ENCODE measurements at regions of chr1 and their contacts with region 1.

Region 1: DNA sequence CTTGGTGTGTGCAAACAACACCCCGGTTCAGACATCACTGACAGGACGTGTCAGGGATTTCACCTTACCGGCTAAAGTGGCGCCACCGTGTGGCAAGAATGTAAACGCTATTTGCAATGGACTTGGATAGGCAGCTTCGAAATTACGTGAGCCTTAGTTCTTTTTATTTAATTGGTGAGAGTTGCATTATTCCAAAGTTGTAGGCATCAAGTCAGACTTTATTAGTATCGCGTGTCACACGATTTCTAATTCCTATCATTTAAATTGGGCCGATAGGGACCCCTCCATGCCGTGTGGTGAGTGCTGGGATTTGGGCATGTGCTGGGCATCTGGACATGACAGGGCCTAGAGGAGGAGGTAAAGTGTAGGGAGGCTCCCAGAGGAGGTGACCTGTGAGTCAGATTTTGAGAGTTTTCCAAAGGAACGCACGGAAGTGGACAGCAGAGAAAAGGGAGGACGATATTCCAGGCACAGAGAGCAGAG is 14.5 kb upstream of the CPT2 start:
- DNase-seq: peak; percentile 84 to 93 (median 84)
- ATAC-seq: peak; percentile 81
- H3K4me3 ChIP-seq: no peak overlapping the region
- H3K27ac ChIP-seq: no peak overlapping the region
- H3K4me1 ChIP-seq: peaks cover 16 to 34% of the 10 kb centered on the region in 2 experiments
- H3K27me3 ChIP-seq: peaks cover 20 to 37% of the 10 kb centered on the region in 2 experiments; a peak in 4 of 5 replicates
- CTCF ChIP-seq: peak; percentile 85 to 95 (median 90)
- EP300 ChIP-seq: no peak
- POLR2A ChIP-seq: no peak
- RAD21 ChIP-seq: peak; percentile 47 to 78

Region 2: GRCh38 chr1:52702886-52703787 is 479.0 kb before region 1 on chr1:
- CTCF ChIA-PET with region 1: no interaction called
- POLR2A ChIA-PET with region 1: no interaction called
- in situ Hi-C with region 1: loop called (anchors 10 kb)
- intact Hi-C with region 1: loop called (anchors 2 kb)
- DNase-seq: peak; percentile 94 to 97 (median 95)
- ATAC-seq: peak; percentile 94
- H3K4me3 ChIP-seq: peak overlapping the region; percentile 26
- H3K27ac ChIP-seq: peak overlapping the region; percentile 61; the same call in 2 of the 3 replicates
- H3K4me1 ChIP-seq: peaks cover 9 to 13% of the 10 kb centered on the region in 2 experiments; a peak in 4 of 5 replicates
- H3K27me3 ChIP-seq: no peaks in the 10 kb centered on the region
- CTCF ChIP-seq: no peak
- EP300 ChIP-seq: peak; percentile 42; the same call in 1 of the 2 replicates
- POLR2A ChIP-seq: peak; percentile 71
- RAD21 ChIP-seq: no peak

Region 3: GRCh38 chr1:52913537-52913936 is 268.6 kb before region 1 on chr1:
- CTCF ChIA-PET with region 1: no interaction called
- POLR2A ChIA-PET with region 1: no interaction called
- in situ Hi-C with region 1: loop called (anchors 25 kb)
- intact Hi-C with region 1: loop called (anchors 2 kb)
- DNase-seq: peak; percentile 81 to 87 (median 84)
- ATAC-seq: peak; percentile 91
- H3K4me3 ChIP-seq: no peak overlapping the region
- H3K27ac ChIP-seq: peak overlapping the region; percentile 43; the same call in 1 of the 3 replicates
- H3K4me1 ChIP-seq: peaks cover 31 to 39% of the 10 kb centered on the region in 2 experiments
- H3K27me3 ChIP-seq: no peaks in the 10 kb centered on the region
- CTCF ChIP-seq: peak; percentile 75 to 82 (median 80)
- EP300 ChIP-seq: peak; percentile 71
- POLR2A ChIP-seq: no peak
- RAD21 ChIP-seq: peak; percentile 30 to 72; a peak in 3 of 4 replicates

Region 4: GRCh38 chr1:53127306-53127945 is 54.7 kb before region 1 on chr1:
- CTCF ChIA-PET with region 1: no interaction called
- POLR2A ChIA-PET with region 1: no interaction called
- in situ Hi-C with region 1: no loop called
- intact Hi-C with region 1: loop called (anchors 2 kb)
- DNase-seq: no peak
- ATAC-seq: peak; percentile 25; the same call in 1 of the 3 replicates
- H3K4me3 ChIP-seq: no peak overlapping the region
- H3K27ac ChIP-seq: no peak overlapping the region
- H3K4me1 ChIP-seq: peaks cover 0 to 8% of the 10 kb centered on the region in 2 experiments; a peak in 3 of 5 replicates
- H3K27me3 ChIP-seq: peaks cover 37 to 60% of the 10 kb centered on the region in 2 experiments
- CTCF ChIP-seq: no peak
- EP300 ChIP-seq: no peak
- POLR2A ChIP-seq: no peak
- RAD21 ChIP-seq: no peak

Region 5: GRCh38 chr1:53165408-53165961 is 16.7 kb before region 1 on chr1:
- CTCF ChIA-PET with region 1: no interaction called
- POLR2A ChIA-PET with region 1: interaction called, 19 read pairs
- in situ Hi-C with region 1: no loop called
- intact Hi-C with region 1: no loop called
- DNase-seq: no peak
- ATAC-seq: no peak
- H3K4me3 ChIP-seq: no peak overlapping the region
- H3K27ac ChIP-seq: no peak overlapping the region
- H3K4me1 ChIP-seq: peaks cover 6 to 9% of the 10 kb centered on the region in 2 experiments; a peak in 4 of 5 replicates
- H3K27me3 ChIP-seq: peaks cover 14 to 18% of the 10 kb centered on the region in 2 experiments; a peak in 4 of 5 replicates
- CTCF ChIP-seq: no peak
- EP300 ChIP-seq: no peak
- POLR2A ChIP-seq: no peak
- RAD21 ChIP-seq: no peak

Region 6: GRCh38 chr1:53196485-53197270 is 14.5 kb after region 1 on chr1 and contains the start of gene CPT2:
- CTCF ChIA-PET with region 1: no interaction called
- POLR2A ChIA-PET with region 1: interaction called, 10 read pairs
- in situ Hi-C with region 1: no loop called
- intact Hi-C with region 1: no loop called
- DNase-seq: peak; percentile 98 to 100 (median 100)
- ATAC-seq: peak; percentile 99
- H3K4me3 ChIP-seq: peak within 1 kb of the TSS; percentile 94
- H3K27ac ChIP-seq: peak within 1 kb of the TSS; percentile 90
- H3K4me1 ChIP-seq: peaks cover 16 to 21% of the 10 kb centered on the region in 2 experiments
- H3K27me3 ChIP-seq: no peaks in the 10 kb centered on the region
- CTCF ChIP-seq: peak in 1 of 3 experiments; percentile 22; a peak in 2 of 6 replicates
- EP300 ChIP-seq: peak; percentile 14; the same call in 1 of the 2 replicates
- POLR2A ChIP-seq: peak; percentile 95
- RAD21 ChIP-seq: peak in 1 of 2 experiments; percentile 4; a peak in 1 of 4 replicates
- polyA plus RNA-seq, gene CPT2: 7.6 to 7.9 TPM

Measured in K562 (cell line).